ENCODE measurements at regions of chr11 and their contacts with region 1.

Region 1: GRCh38 chr11:114348200-114349191 is 51.8 kb downstream of the C11orf71 start:
- DNase-seq: peak; percentile 65
- H3K4me3 ChIP-seq: no peak overlapping the region
- H3K27ac ChIP-seq: no peak overlapping the region
- H3K4me1 ChIP-seq: peaks cover 15% of the 10 kb centered on the region
- H3K27me3 ChIP-seq: no peaks in the 10 kb centered on the region
- CTCF ChIP-seq: peak; percentile 48 to 62

Region 2: GRCh38 chr11:114015119-114015518 is 333.4 kb before region 1 on chr11:
- CTCF ChIA-PET with region 1: no interaction called
- dilution Hi-C with region 1: no loop called
- in situ Hi-C with region 1: no loop called
- intact Hi-C with region 1: no loop called
- DNase-seq: no peak
- H3K4me3 ChIP-seq: no peak overlapping the region
- H3K27ac ChIP-seq: no peak overlapping the region
- H3K4me1 ChIP-seq: no peaks in the 10 kb centered on the region
- H3K27me3 ChIP-seq: no peaks in the 10 kb centered on the region
- CTCF ChIP-seq: no peak

Region 3: DNA sequence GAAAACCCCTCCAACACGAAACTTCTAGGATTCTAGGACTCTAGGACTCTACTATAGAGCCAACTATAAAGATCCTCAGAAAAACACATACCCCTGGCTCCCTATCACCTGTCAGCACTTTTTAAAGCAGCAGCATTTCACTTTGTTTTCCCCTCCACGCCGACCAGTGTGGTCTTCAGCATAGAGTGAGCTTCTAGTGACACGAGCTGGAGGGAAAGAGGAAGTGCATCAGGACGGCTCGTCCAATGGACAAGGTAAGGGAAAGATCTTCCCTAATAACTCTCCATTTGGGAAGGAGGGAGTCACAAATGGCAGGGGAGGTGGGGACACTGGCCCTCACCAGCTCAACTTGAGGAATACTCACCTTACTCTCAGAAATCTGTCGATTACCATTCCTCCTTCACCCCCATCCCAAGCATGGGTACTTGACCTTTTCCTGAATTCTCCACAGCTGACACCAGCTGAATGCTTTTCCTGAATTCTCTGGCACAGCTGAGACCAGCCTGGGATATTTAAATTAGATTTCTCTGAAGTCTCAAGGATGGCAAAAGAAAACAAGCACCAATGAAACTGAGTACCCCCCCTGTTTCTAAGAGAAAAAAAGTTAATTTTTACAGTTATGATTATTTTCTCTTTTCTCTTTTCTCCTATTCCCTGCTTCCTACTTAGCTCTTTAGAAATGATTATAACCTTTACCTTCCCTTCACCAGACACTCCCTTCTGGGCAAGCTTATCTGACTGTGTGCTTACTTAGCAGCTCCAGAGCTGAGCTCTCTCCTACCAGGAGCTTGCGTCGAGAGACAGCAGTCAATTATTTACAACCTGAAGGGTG is 85.6 kb before region 1 on chr11:
- CTCF ChIA-PET with region 1: no interaction called
- dilution Hi-C with region 1: no loop called
- in situ Hi-C with region 1: no loop called
- intact Hi-C with region 1: no loop called
- DNase-seq: peak; percentile 33
- H3K4me3 ChIP-seq: no peak overlapping the region
- H3K27ac ChIP-seq: no peak overlapping the region
- H3K4me1 ChIP-seq: no peaks in the 10 kb centered on the region
- H3K27me3 ChIP-seq: no peaks in the 10 kb centered on the region
- CTCF ChIP-seq: peak; percentile 67 to 76

Region 4: DNA sequence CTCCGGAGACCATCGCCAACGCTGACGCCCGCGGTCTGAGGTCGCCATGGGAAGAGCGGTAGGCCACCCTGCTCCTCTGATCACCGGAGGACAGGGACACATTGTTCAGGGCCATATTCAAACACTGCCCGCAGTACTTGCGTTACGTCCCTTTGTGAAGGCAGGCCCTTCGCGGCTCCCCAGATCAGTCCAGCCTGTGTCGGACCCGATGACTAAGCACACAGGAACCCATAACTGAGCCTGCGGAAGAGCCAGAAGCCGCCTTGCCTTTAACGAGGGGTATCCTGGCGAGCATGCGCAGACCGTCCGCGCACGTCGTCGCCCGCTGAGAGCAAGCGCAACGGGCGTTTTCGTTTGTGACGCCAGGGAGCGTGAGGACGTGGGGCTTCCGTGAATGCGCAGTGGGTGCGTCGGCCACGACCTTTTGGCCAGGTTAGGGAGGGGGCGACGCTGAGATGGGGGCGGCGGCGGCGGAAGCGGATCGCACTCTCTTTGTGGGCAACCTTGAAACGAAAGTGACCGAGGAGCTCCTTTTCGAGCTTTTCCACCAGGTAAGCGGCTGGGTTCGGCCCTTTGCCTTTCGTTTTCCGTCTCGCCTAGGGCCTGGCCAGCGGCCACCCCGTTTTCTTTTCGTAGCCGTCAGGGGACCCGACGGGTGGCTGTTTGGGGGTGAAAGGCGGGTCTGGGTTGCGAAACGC is 51.9 kb after region 1 on chr11 and contains the starts of genes C11orf71 and RBM7:
- CTCF ChIA-PET with region 1: no interaction called
- dilution Hi-C with region 1: no loop called
- in situ Hi-C with region 1: loop called in 1 of 2 experiments (anchors 5 kb)
- intact Hi-C with region 1: loop called (anchors 1 kb)
- DNase-seq: peak; percentile 99
- H3K4me3 ChIP-seq: peak within 1 kb of the TSS; percentile 77 to 91 (median 89)
- H3K27ac ChIP-seq: peak within 1 kb of the TSS; percentile 99
- H3K4me1 ChIP-seq: peaks cover 4% of the 10 kb centered on the region
- H3K27me3 ChIP-seq: no peaks in the 10 kb centered on the region
- CTCF ChIP-seq: peak in 1 of 2 donors; percentile 9
- total RNA-seq, gene C11orf71: 1.2 to 2.0 TPM
- total RNA-seq, gene RBM7: 37.5 to 42.8 TPM

Region 5: GRCh38 chr11:114606003-114606801 is 257.7 kb after region 1 on chr11:
- CTCF ChIA-PET with region 1: no interaction called
- dilution Hi-C with region 1: no loop called
- in situ Hi-C with region 1: no loop called
- intact Hi-C with region 1: loop called (anchors 2 kb)
- DNase-seq: no peak
- H3K4me3 ChIP-seq: no peak overlapping the region
- H3K27ac ChIP-seq: no peak overlapping the region
- H3K4me1 ChIP-seq: no peaks in the 10 kb centered on the region
- H3K27me3 ChIP-seq: no peaks in the 10 kb centered on the region
- CTCF ChIP-seq: peak in 1 of 2 donors; percentile 5